ENCODE measurements at regions of chr15 and their contacts with region 1.

Region 1: GRCh38 chr15:43433165-43433564 is 59.8 kb downstream of the TP53BP1 start:
- DNase-seq: no peak
- H3K4me3 ChIP-seq: no peak overlapping the region
- H3K4me3 Mint-ChIP-seq: no peak overlapping the region
- H3K27ac ChIP-seq: no peak overlapping the region
- H3K27ac Mint-ChIP-seq: no peak overlapping the region
- H3K4me1 ChIP-seq: no peaks in the 10 kb centered on the region
- H3K4me1 Mint-ChIP-seq: no peaks in the 10 kb centered on the region
- H3K27me3 ChIP-seq: no peaks in the 10 kb centered on the region
- H3K27me3 Mint-ChIP-seq: no peaks in the 10 kb centered on the region
- CTCF ChIP-seq: no peak

Region 2: GRCh38 chr15:43029476-43029875 is 403.7 kb before region 1 on chr15:
- intact Hi-C with region 1: no loop called
- DNase-seq: peak; percentile 3 to 16 (median 10)
- H3K4me3 ChIP-seq: no peak overlapping the region
- H3K4me3 Mint-ChIP-seq: no peak overlapping the region
- H3K27ac ChIP-seq: peak overlapping the region in 1 of 2 donors; percentile 67
- H3K27ac Mint-ChIP-seq: peak overlapping the region in 6 of 7 donors; percentile 19 to 74 (median 64)
- H3K4me1 ChIP-seq: peaks cover 4 to 8% of the 10 kb centered on the region in 2 donors
- H3K4me1 Mint-ChIP-seq: peaks cover 8% of the 10 kb centered on the region
- H3K27me3 ChIP-seq: no peaks in the 10 kb centered on the region
- H3K27me3 Mint-ChIP-seq: no peaks in the 10 kb centered on the region
- CTCF ChIP-seq: no peak

Region 3: DNA sequence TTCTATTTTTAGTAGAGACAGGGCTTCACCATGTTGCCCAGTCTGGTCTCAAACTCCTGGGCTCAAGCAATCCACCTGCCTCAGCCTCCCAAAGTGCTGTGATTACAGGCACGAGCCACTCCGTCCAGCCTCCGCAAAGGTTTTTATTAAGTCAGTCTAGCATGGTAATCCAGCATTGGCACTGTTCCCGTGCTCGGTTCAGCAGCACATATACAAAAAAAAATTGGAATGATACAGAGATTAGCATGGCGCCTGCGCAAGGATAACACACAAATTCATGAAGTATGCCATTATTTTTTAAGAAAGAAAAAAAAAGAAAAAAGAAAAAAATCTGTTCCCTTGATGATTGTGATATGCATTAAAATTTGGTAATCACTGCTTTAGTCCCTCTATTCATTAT is 269.0 kb after region 1 on chr15:
- intact Hi-C with region 1: loop called in 1 of 2 experiments (anchors 10 kb)
- DNase-seq: no peak
- H3K4me3 ChIP-seq: no peak overlapping the region
- H3K4me3 Mint-ChIP-seq: no peak overlapping the region
- H3K27ac ChIP-seq: no peak overlapping the region
- H3K27ac Mint-ChIP-seq: no peak overlapping the region
- H3K4me1 ChIP-seq: no peaks in the 10 kb centered on the region
- H3K4me1 Mint-ChIP-seq: no peaks in the 10 kb centered on the region
- H3K27me3 ChIP-seq: peaks cover 2% of the 10 kb centered on the region in 2 donors
- H3K27me3 Mint-ChIP-seq: peaks cover 5 to 13% (median 11%) of the 10 kb centered on the region in 3 donors
- CTCF ChIP-seq: no peak